ENCODE measurements at regions of chr1 and their contacts with region 1.

Region 1: DNA sequence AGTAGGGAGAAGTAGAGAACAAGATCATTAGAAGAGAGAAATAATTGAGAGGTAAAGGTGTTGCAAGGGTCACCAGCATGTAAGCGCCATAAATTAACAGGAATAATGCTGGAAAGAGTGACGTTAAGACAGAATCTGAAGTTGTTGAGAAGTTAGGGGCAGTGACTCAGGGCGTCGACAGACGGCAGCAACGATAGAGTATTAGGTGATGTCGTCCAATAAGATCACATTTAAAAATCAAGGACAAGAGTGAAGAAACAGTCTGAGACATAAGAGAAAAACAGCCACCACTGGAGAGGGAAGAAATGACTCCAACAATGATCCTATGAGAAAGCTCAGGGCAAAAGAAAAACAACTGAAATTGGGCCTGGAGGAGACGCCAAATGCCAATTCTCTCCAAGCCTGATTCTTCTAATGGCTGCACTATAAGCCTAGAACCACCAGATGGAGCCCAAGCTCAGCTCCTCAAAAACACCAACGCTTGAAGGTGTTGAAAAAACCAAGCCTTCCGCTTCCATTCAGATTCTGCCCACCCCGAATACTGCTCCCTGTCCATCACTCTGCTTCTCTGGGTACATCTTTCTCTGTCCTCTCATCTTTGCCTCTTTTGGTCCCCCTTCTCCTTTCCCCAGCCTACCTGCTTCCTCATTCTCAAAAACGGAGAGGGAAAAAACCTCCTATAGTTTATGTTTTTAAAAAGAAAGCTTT is 70.0 kb downstream of the LUZP1 start:
- DNase-seq: no peak
- ATAC-seq: peak; percentile 69

Region 2: GRCh38 chr1:23184212-23184934 is 85.8 kb after region 1 on chr1:
- intact Hi-C with region 1: loop called (anchors 2 kb)
- DNase-seq: peak; percentile 32
- ATAC-seq: peak; percentile 44